ENCODE measurements at regions of chr2 and their contacts with region 1.

Region 1: GRCh38 chr2:178796079-178796677 is 11.0 kb downstream of the TTN start:
- DNase-seq: no peak
- ATAC-seq: no peak

Region 2: GRCh38 chr2:178914259-178914849 is 118.2 kb after region 1 on chr2:
- intact Hi-C with region 1: loop called (anchors 5 kb)
- DNase-seq: peak; percentile 89
- ATAC-seq: peak; percentile 91

Region 3: GRCh38 chr2:179253226-179253625 is 457.0 kb after region 1 on chr2:
- intact Hi-C with region 1: no loop called
- DNase-seq: no peak
- ATAC-seq: no peak